Posterior vena cava (tissue), 2 donors: ENCODE measurements at regions of chr14 and their contacts with region 1.

Region 1: GRCh38 chr14:81737938-81738337 is 204.3 kb upstream of the SEL1L start:
- DNase-seq: no peak

Region 2: GRCh38 chr14:81684696-81685095 is 53.2 kb before region 1 on chr14:
- intact Hi-C with region 1: loop called in 1 of 2 experiments (anchors 2 kb)
- DNase-seq: no peak

Region 3: DNA sequence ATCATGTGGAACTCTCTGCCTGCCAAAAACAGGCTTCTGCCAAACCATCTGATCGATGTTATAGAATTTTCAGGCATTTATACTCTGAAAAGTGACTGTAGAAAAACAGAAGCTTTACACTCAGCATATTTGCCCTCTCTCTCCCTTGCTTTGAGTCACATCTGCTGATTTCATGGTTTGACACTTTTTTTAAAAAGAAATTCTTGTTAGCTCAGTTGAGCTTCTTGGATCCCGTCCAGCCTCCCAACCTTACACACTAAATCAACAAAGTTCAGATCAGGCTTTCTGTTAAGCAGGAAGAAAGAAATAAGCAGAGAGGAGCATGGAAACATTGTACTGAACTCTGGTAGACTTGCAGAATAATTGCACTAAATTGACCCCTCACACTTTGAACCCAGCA is 10.7 kb before region 1 on chr14:
- intact Hi-C with region 1: no loop called
- DNase-seq: no peak